ENCODE measurements at regions of chr6 and their contacts with region 1.

Region 1: GRCh38 chr6:106444777-106445507 is 84.4 kb downstream of the CRYBG1 start:
- DNase-seq: no peak
- H3K4me3 ChIP-seq: no peak overlapping the region
- H3K27ac ChIP-seq: no peak overlapping the region
- H3K4me1 ChIP-seq: peaks cover 0 to 25% (median 1%) of the 10 kb centered on the region in 4 donors
- H3K27me3 ChIP-seq: peaks cover 6% of the 10 kb centered on the region
- CTCF ChIP-seq: peak; percentile 66 to 88 (median 83)
- EP300 ChIP-seq: no peak
- POLR2A ChIP-seq: no peak

Region 2: GRCh38 chr6:106339334-106340029 is 105.5 kb before region 1 on chr6:
- in situ Hi-C with region 1: loop called in 1 of 4 experiments (anchors 10 kb)
- intact Hi-C with region 1: no loop called
- DNase-seq: peak; percentile 49
- H3K4me3 ChIP-seq: no peak overlapping the region
- H3K27ac ChIP-seq: no peak overlapping the region
- H3K4me1 ChIP-seq: peaks cover 0 to 3% (median 1%) of the 10 kb centered on the region in 4 donors
- H3K27me3 ChIP-seq: no peaks in the 10 kb centered on the region
- CTCF ChIP-seq: peak; percentile 60 to 73 (median 70)
- EP300 ChIP-seq: no peak
- POLR2A ChIP-seq: no peak

Region 3: GRCh38 chr6:106556368-106556960 is 111.5 kb after region 1 on chr6:
- in situ Hi-C with region 1: no loop called
- intact Hi-C with region 1: loop called (anchors 5 kb)
- DNase-seq: no peak
- H3K4me3 ChIP-seq: no peak overlapping the region
- H3K27ac ChIP-seq: no peak overlapping the region
- H3K4me1 ChIP-seq: no peaks in the 10 kb centered on the region
- H3K27me3 ChIP-seq: no peaks in the 10 kb centered on the region
- CTCF ChIP-seq: peak; percentile 11 to 30 (median 23)
- EP300 ChIP-seq: no peak
- POLR2A ChIP-seq: no peak

Region 4: DNA sequence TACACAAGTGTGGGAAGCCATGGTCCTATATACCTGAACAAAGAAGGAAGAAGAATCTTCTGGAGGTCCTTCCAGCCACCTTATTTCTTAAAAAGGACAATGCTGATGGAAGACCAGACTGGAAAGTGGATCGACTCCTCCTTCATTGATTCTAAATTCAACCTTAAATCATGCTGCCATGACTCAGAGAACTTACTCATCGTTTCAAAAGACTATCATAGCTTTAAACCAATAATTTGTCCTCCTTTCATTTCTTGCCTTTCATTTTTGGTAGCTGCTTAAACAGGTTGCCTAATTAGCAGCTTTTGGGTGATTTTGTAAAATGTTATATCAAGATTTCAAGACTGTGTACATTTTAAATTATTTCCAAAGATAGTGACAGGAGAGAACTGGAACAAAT is 123.6 kb after region 1 on chr6:
- in situ Hi-C with region 1: loop called (anchors 5 kb)
- intact Hi-C with region 1: loop called (anchors 5 kb)
- DNase-seq: no peak
- H3K4me3 ChIP-seq: no peak overlapping the region
- H3K27ac ChIP-seq: no peak overlapping the region
- H3K4me1 ChIP-seq: peaks cover 0 to 6% (median 0%) of the 10 kb centered on the region in 4 donors
- H3K27me3 ChIP-seq: no peaks in the 10 kb centered on the region
- CTCF ChIP-seq: no peak
- EP300 ChIP-seq: no peak
- POLR2A ChIP-seq: no peak

Region 5: GRCh38 chr6:106608062-106608668 is 163.2 kb after region 1 on chr6:
- in situ Hi-C with region 1: no loop called
- intact Hi-C with region 1: no loop called
- DNase-seq: peak; percentile 12
- H3K4me3 ChIP-seq: no peak overlapping the region
- H3K27ac ChIP-seq: no peak overlapping the region
- H3K4me1 ChIP-seq: no peaks in the 10 kb centered on the region
- H3K27me3 ChIP-seq: no peaks in the 10 kb centered on the region
- CTCF ChIP-seq: peak; percentile 53 to 87 (median 64)
- EP300 ChIP-seq: no peak
- POLR2A ChIP-seq: no peak

Region 6: DNA sequence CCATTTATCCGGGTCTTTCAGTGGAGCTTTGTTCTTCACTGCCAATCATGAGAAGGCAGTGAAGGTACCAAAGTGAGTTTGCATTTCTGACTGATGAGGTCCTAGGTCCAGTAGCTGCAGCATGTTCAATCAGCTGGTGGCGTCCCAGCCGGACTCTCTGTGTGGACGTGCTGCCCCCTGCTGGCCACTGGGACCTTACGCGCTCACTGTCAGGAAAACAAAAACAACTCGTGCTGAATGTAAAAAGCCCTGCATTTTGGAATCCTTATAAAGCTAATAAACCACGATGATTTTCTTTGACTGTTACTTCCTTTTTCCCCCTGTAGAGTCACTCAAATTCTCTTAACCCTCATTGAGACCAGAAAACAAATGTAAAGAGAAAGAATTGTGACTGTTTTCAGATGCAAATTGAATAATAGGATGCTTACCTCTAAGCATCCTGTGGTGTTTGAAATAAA is 534.5 kb after region 1 on chr6:
- in situ Hi-C with region 1: loop called (anchors 10 kb)
- intact Hi-C with region 1: no loop called
- DNase-seq: peak; percentile 91
- H3K4me3 ChIP-seq: no peak overlapping the region
- H3K27ac ChIP-seq: no peak overlapping the region
- H3K4me1 ChIP-seq: peaks cover 0 to 23% (median 16%) of the 10 kb centered on the region in 4 donors
- H3K27me3 ChIP-seq: peaks cover 26% of the 10 kb centered on the region
- CTCF ChIP-seq: peak; percentile 87 to 95 (median 93)
- EP300 ChIP-seq: no peak
- POLR2A ChIP-seq: no peak

Region 7: GRCh38 chr6:107124934-107125348 is 680.0 kb after region 1 on chr6:
- in situ Hi-C with region 1: no loop called
- intact Hi-C with region 1: no loop called
- DNase-seq: peak; percentile 11
- H3K4me3 ChIP-seq: no peak overlapping the region
- H3K27ac ChIP-seq: no peak overlapping the region
- H3K4me1 ChIP-seq: peaks cover 0 to 17% (median 6%) of the 10 kb centered on the region in 4 donors
- H3K27me3 ChIP-seq: no peaks in the 10 kb centered on the region
- CTCF ChIP-seq: no peak
- EP300 ChIP-seq: no peak
- POLR2A ChIP-seq: no peak